ENCODE measurements at regions of chr22 and their contacts with region 1.

Region 1: GRCh38 chr22:31080848-31081649 is at the start of gene SMTN:
- DNase-seq: peak; percentile 93
- ATAC-seq: peak; percentile 81
- H3K4me3 Mint-ChIP-seq: peak within 1 kb of the TSS; percentile 86
- H3K27ac Mint-ChIP-seq: peak within 1 kb of the TSS; percentile 82
- H3K4me1 Mint-ChIP-seq: peaks cover 36% of the 10 kb centered on the region
- H3K27me3 Mint-ChIP-seq: no peaks in the 10 kb centered on the region
- total RNA-seq, gene SMTN: 35.6 to 51.2 TPM

Region 2: DNA sequence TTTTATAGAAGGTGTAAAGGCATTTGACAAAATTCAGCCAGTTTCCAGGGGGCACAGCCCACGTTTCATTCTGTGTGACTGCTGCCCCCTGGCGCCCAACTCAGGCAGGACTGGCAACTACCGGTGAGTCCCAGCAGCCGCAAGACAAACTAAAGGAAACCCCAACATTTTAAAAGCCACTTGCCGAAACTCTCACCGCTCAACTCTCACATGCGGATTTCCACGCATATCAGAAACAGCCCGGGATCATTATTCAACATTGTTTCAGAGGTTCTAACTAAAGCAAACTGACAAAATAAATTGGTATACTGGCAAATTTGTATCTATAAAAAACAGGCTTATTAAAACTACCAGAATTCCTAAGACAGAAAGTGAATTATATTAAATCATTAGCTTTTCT is 160.6 kb before region 1 on chr22:
- CTCF ChIA-PET with region 1: interaction called, 14 read pairs
- DNase-seq: peak; percentile 88
- ATAC-seq: peak; percentile 79
- H3K4me3 Mint-ChIP-seq: peak overlapping the region; percentile 36
- H3K27ac Mint-ChIP-seq: no peak overlapping the region
- H3K4me1 Mint-ChIP-seq: peaks cover 16% of the 10 kb centered on the region
- H3K27me3 Mint-ChIP-seq: no peaks in the 10 kb centered on the region

Region 3: DNA sequence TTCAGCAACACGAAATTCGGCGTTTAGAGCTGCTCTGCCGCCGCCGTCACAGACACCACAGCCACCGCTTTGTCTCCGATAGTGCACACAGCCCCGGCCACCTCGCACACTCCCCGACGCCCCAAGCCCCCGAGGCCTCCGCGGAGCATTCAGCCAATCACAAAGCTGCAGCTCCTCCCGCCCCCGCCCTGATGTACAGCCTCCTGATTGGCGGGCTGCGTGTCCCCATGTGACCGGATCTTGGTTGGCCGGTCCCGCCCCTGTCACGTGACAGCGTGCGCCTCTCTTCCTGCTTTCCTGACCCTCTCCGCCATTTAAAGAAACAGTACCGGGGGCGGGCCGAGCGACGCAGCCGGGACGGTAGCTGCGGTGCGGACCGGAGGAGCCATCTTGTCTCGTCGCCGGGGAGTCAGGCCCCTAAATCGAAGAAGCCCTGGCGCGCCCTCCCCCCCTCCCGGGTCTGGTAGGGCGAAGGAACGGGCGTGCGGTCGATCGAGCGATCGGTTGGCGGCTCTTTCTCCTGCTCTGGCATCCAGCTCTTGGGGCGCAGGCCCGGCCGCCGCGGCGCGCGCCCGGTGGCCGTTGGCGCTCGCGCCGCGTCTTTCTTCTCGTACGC is 112.0 kb before region 1 on chr22 and contains the start of gene TUG1:
- CTCF ChIA-PET with region 1: interaction called, 15 read pairs
- DNase-seq: peak; percentile 99
- ATAC-seq: peak; percentile 95
- H3K4me3 Mint-ChIP-seq: peak within 1 kb of the TSS; percentile 91
- H3K27ac Mint-ChIP-seq: peak within 1 kb of the TSS; percentile 97
- H3K4me1 Mint-ChIP-seq: peaks cover 52% of the 10 kb centered on the region
- H3K27me3 Mint-ChIP-seq: no peaks in the 10 kb centered on the region
- total RNA-seq, gene TUG1: 56.7 to 69.8 TPM

Region 4: DNA sequence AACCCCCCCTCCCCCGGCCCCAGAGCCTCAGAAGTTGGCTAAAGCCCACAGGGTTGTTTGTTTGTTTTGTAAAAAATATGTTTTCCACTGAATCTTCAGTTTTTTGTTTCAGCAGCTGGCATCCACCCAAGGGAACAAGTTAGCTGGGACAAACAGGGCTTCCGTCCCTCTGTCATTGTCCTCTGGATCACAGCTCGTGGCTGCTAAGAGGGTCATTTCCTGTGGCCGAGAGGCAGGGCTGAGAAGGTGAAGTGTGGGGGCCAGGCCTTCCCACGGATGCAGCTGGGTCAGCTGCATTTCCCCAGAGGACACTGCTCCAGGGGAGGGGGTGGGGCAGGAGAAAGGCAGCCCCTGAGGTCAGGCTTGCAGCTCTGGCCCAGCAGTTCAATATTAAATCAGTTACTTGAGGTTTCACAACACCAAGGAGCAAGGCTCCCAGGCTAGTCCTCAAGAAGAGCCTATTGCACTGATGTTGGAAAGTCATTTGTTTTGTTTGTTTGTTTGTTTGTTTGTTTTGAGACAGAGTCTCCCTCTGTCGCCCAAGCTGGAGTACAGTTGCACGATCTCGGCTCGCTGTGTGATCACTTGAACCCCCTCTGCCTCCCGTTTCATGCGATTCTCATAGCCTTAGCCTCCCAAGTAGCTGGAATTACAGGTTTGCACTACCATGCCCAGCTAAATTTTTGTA is 34.4 kb before region 1 on chr22:
- CTCF ChIA-PET with region 1: no interaction called
- DNase-seq: no peak
- ATAC-seq: no peak
- H3K4me3 Mint-ChIP-seq: no peak overlapping the region
- H3K27ac Mint-ChIP-seq: no peak overlapping the region
- H3K4me1 Mint-ChIP-seq: no peaks in the 10 kb centered on the region
- H3K27me3 Mint-ChIP-seq: no peaks in the 10 kb centered on the region

Region 5: GRCh38 chr22:31107178-31107893 is 26.3 kb after region 1 on chr22 and contains the start of gene SELENOM:
- CTCF ChIA-PET with region 1: interaction called, 19 read pairs
- DNase-seq: peak; percentile 92
- ATAC-seq: peak; percentile 97
- H3K4me3 Mint-ChIP-seq: peak within 1 kb of the TSS; percentile 78
- H3K27ac Mint-ChIP-seq: peak within 1 kb of the TSS; percentile 31
- H3K4me1 Mint-ChIP-seq: peaks cover 12% of the 10 kb centered on the region
- H3K27me3 Mint-ChIP-seq: peaks cover 12% of the 10 kb centered on the region
- total RNA-seq, gene SELENOM: 0.49 to 1.5 TPM

Region 6: DNA sequence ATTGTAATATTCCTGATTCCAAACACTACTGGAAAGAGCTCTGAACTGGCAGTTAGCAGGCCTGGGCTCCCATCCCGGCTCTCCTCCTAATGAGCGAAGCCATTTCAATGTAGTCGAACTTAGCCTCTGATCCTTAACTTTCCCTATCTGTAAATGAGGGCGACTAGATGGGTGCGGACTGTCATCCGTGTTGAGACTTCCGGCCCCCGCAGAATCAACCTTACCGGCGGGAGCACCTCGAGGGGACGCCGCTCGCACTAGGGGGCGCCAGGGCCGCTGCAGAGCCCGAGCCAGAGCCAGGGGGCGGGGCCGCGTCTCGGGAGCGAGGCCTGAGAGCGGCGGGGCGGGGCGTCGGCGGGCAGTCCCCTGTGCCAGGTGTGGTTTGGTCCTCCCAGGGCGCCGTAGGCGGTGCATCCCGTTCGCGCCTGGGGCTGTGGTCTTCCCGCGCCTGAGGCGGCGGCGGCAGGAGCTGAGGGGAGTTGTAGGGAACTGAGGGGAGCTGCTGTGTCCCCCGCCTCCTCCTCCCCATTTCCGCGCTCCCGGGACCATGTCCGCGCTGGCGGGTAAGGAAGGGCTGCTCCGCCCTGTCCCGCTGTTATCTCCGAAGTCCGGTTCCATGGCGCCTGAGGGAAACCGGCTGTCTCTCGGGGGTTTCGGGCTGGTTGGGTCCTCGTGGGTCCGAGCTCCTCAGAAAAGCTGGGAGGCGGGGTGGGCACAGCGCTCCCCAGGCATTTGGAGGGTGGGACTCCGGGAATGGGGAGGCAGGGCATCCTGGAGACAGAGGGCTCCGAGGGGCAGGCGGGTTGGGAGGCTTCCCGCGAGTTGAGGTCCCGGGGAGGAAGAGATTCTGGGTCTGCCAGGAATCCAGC is 131.0 kb after region 1 on chr22 and contains the start of gene LIMK2:
- CTCF ChIA-PET with region 1: interaction called, 14 read pairs
- DNase-seq: peak; percentile 98
- ATAC-seq: peak; percentile 98
- H3K4me3 Mint-ChIP-seq: peak within 1 kb of the TSS; percentile 81
- H3K27ac Mint-ChIP-seq: peak within 1 kb of the TSS; percentile 88
- H3K4me1 Mint-ChIP-seq: peaks cover 36% of the 10 kb centered on the region
- H3K27me3 Mint-ChIP-seq: no peaks in the 10 kb centered on the region
- total RNA-seq, gene LIMK2: 32.2 to 47.3 TPM